IMR-90 (cell line): ENCODE measurements at regions of chr4 and their contacts with region 1.

Region 1: GRCh38 chr4:3480528-3481112 is 17.5 kb downstream of the DOK7 start:
- DNase-seq: peak; percentile 63
- ATAC-seq: peak; percentile 98
- H3K4me3 ChIP-seq: no peak overlapping the region
- H3K27ac ChIP-seq: no peak overlapping the region
- H3K4me1 ChIP-seq: no peaks in the 10 kb centered on the region
- H3K27me3 ChIP-seq: peaks cover 51% of the 10 kb centered on the region
- CTCF ChIP-seq: peak; percentile 97
- POLR2A ChIP-seq: no peak
- RAD21 ChIP-seq: peak; percentile 85

Region 2: GRCh38 chr4:2732991-2733868 is 747.4 kb before region 1 on chr4:
- CTCF ChIA-PET with region 1: no interaction called
- POLR2A ChIA-PET with region 1: no interaction called
- dilution Hi-C with region 1: no loop called
- in situ Hi-C with region 1: no loop called
- intact Hi-C with region 1: no loop called
- DNase-seq: no peak
- ATAC-seq: no peak; the same call in 1 of the 2 replicates
- H3K4me3 ChIP-seq: no peak overlapping the region
- H3K27ac ChIP-seq: no peak overlapping the region
- H3K4me1 ChIP-seq: no peaks in the 10 kb centered on the region
- H3K27me3 ChIP-seq: no peaks in the 10 kb centered on the region
- CTCF ChIP-seq: no peak
- POLR2A ChIP-seq: no peak
- RAD21 ChIP-seq: no peak

Region 3: DNA sequence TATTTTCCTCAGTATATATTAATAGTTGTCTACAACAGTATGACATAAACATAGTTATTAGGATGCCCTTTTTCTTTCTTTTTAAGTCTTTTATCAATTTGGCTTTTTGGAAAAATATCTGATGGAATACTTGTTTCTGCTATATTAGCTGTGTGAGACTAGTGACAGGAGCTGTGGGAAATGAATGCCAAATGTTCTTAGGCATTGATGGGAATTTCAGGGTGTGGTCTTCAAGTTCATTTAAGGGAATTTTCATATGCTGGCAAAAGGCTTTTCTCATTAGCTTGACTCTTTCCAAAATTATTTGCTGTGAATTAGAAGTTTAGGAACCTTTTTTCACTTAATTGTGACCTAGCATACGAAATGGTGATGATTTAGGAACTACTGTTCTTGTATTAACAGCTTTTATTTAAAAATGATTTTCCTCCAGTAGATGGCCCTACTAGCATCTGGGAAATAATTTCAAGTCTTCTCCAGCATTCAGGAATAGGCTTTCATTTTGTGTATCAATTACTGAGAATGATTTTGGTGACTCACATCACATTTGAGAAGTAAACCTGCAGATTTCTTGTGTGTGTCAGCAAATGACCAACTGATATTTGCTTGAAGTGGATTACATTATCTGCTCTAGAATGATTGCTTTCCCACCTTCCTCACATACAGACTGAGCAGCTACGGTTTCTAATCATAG is 335.2 kb before region 1 on chr4:
- CTCF ChIA-PET with region 1: no interaction called
- POLR2A ChIA-PET with region 1: no interaction called
- dilution Hi-C with region 1: no loop called
- in situ Hi-C with region 1: no loop called
- intact Hi-C with region 1: loop called (anchors 1 kb)
- DNase-seq: peak; percentile 80
- ATAC-seq: peak; percentile 80
- H3K4me3 ChIP-seq: no peak overlapping the region
- H3K27ac ChIP-seq: no peak overlapping the region
- H3K4me1 ChIP-seq: no peaks in the 10 kb centered on the region
- H3K27me3 ChIP-seq: no peaks in the 10 kb centered on the region
- CTCF ChIP-seq: peak; percentile 33
- POLR2A ChIP-seq: no peak
- RAD21 ChIP-seq: peak; percentile 44

Region 4: DNA sequence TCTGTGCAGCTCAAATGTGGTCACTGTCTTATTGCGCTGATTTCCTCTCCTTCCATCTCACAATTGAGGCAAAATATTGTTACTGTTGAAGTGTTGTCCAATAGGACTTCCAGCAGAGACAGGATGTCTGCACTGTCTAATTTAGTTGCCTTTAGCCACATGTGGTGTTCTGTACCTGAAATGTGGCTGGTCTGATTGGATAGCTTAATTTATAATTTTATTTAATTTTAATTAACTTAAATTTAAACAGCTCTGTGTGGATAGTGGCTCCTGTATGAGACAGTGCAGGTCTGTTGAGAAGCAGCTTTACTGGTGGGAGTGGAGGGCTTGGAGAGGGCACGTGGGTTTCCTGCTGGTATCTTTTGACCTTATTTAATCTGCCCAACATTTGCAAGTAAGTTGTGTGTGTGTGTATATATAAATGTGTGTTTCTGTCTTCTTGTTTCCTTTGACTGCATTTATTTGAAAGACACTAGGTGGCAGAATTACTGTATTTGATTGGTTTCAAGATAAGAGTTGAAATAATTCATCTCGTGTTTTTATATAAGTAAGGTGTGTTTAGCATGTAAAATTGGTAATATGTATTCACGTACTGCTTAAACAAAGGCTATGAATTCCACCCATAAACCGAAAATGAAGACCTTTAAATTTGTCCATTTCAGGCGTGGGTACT is 287.0 kb before region 1 on chr4:
- CTCF ChIA-PET with region 1: interaction called, 3 read pairs
- POLR2A ChIA-PET with region 1: no interaction called
- dilution Hi-C with region 1: no loop called
- in situ Hi-C with region 1: no loop called
- intact Hi-C with region 1: loop called (anchors 5 kb)
- DNase-seq: peak; percentile 22
- ATAC-seq: no peak
- H3K4me3 ChIP-seq: no peak overlapping the region
- H3K27ac ChIP-seq: no peak overlapping the region
- H3K4me1 ChIP-seq: peaks cover 6% of the 10 kb centered on the region
- H3K27me3 ChIP-seq: no peaks in the 10 kb centered on the region
- CTCF ChIP-seq: peak; percentile 50
- POLR2A ChIP-seq: no peak
- RAD21 ChIP-seq: peak; percentile 24

Region 5: DNA sequence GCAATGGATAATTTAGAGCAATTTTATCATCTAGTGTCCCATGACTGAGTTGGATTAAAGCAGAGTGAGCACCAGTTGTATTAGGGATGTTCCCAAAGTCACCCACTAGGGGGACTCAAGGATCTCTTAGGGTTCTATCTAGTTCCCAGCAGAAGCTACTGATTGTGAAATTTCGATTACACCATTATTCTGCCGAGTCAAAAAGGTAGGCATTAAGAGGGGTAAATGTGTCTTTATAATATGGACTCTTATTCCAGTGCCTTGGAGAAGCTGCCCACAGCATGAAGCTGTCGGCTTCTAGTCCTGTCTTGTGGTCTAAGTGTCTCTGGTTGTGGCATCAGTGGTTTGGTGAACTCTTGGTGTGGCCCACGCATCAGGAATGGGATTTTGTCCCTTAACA is 134.5 kb before region 1 on chr4:
- CTCF ChIA-PET with region 1: interaction called, 3 read pairs
- POLR2A ChIA-PET with region 1: no interaction called
- dilution Hi-C with region 1: no loop called
- in situ Hi-C with region 1: no loop called
- intact Hi-C with region 1: loop called (anchors 1 kb)
- DNase-seq: peak; percentile 84
- ATAC-seq: peak; percentile 84
- H3K4me3 ChIP-seq: no peak overlapping the region
- H3K27ac ChIP-seq: no peak overlapping the region
- H3K4me1 ChIP-seq: peaks cover 13% of the 10 kb centered on the region
- H3K27me3 ChIP-seq: no peaks in the 10 kb centered on the region
- CTCF ChIP-seq: peak; percentile 98
- POLR2A ChIP-seq: no peak
- RAD21 ChIP-seq: peak; percentile 97